Activated CD8-positive, alpha-beta T cell treated with anti-CD3 and anti-CD28 coated beads for 36 hours (primary cell): ENCODE measurements at regions of chr14 and their contacts with region 1.

Region 1: DNA sequence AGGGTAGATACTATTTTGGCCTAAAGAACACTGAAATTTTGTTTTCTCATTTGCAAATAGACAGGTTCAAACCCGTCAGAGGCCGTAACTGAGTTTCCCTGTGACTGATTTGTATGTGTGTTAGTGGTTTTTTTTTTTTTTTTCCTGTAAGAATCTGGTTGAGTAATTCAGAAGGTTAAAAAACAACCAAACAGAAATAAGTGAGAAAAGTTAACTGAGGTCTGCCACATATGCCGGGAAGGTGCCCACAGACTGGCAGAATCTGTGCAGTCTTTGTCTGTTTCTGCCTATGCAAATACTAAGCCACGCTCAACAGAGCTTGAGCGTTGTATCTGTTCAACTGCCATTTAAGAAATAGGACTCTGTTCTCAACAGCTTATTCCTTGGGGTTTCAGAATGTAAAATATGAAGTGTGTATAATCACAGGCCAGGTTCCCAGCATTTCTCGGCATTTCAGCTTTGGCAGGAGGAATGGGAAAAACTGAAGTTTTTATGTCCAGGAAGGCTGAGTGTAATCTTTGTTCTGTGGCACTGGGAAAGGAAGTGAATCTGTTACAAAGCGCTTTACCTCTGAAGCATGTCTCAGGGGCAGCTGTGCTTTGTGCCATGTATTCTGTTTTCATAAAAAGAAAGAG is 181.9 kb downstream of the PRKCH start:
- DNase-seq: peak; percentile 89
- ATAC-seq: peak; percentile 75
- H3K4me3 Mint-ChIP-seq: peak overlapping the region; percentile 70
- H3K27ac Mint-ChIP-seq: peak overlapping the region; percentile 100
- H3K4me1 Mint-ChIP-seq: peaks cover 97% of the 10 kb centered on the region
- H3K27me3 Mint-ChIP-seq: no peaks in the 10 kb centered on the region
- CTCF ChIP-seq: no peak

Region 2: DNA sequence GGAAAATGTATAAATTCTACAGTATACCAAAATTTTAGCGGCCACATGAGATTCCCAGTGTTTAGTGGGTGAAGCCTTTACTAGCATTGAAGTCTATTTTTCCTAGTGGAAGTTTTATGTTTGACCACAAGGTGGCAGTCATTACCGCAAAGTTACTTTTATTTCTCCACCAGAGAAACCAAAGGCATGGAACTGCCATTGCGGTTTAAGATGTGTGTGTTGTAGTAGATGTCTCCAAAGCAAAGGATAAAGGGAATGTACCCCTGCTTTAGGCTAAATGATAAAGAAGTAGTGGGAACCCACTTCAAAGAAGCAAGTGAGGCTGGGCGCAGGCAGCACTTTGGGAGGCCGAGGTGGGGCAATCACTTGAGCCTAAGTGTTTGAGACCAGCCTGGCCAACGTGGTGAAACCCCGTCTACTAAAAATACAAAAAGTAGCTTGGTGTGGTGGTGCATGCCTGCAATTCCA is 41.4 kb before region 1 on chr14:
- CTCF ChIA-PET with region 1: interaction called, 11 read pairs
- POLR2A ChIA-PET with region 1: interaction called, 3 read pairs
- intact Hi-C with region 1: no loop called
- DNase-seq: peak; percentile 42
- ATAC-seq: peak; percentile 22
- H3K4me3 Mint-ChIP-seq: no peak overlapping the region
- H3K27ac Mint-ChIP-seq: peak overlapping the region; percentile 97
- H3K4me1 Mint-ChIP-seq: peaks cover 63% of the 10 kb centered on the region
- H3K27me3 Mint-ChIP-seq: no peaks in the 10 kb centered on the region
- CTCF ChIP-seq: peak; percentile 96

Region 3: DNA sequence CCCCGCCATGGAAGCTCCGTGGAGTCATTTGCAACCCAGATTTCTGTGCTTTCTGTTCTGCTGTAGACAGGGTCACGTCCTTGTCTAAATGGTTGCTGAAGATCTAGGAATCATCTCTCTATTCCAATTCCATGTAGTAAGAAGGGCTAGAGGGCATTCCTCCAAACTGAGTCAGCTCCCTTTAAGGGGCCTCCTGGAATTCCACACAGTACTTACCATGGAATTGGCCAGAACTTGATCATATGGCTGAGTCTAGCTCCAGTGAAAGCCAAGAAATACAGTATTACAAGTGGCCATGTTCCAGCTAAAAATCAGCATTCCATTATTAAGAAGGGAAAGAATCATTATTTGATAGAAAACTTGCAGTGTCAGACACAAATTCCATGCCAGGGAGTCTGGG is 10.0 kb before region 1 on chr14:
- CTCF ChIA-PET with region 1: interaction called, 10 read pairs
- POLR2A ChIA-PET with region 1: interaction called, 12 read pairs
- intact Hi-C with region 1: no loop called
- DNase-seq: no peak
- ATAC-seq: no peak
- H3K4me3 Mint-ChIP-seq: no peak overlapping the region
- H3K27ac Mint-ChIP-seq: no peak overlapping the region
- H3K4me1 Mint-ChIP-seq: peaks cover 53% of the 10 kb centered on the region
- H3K27me3 Mint-ChIP-seq: no peaks in the 10 kb centered on the region
- CTCF ChIP-seq: no peak